ENCODE measurements at regions of chr14 and their contacts with region 1.

Region 1: GRCh38 chr14:34671716-34672115 is 41.8 kb upstream of the SNX6 start:
- DNase-seq: no peak
- H3K4me3 Mint-ChIP-seq: no peak overlapping the region
- H3K27ac Mint-ChIP-seq: no peak overlapping the region
- H3K4me1 Mint-ChIP-seq: no peaks in the 10 kb centered on the region
- H3K27me3 Mint-ChIP-seq: no peaks in the 10 kb centered on the region

Region 2: DNA sequence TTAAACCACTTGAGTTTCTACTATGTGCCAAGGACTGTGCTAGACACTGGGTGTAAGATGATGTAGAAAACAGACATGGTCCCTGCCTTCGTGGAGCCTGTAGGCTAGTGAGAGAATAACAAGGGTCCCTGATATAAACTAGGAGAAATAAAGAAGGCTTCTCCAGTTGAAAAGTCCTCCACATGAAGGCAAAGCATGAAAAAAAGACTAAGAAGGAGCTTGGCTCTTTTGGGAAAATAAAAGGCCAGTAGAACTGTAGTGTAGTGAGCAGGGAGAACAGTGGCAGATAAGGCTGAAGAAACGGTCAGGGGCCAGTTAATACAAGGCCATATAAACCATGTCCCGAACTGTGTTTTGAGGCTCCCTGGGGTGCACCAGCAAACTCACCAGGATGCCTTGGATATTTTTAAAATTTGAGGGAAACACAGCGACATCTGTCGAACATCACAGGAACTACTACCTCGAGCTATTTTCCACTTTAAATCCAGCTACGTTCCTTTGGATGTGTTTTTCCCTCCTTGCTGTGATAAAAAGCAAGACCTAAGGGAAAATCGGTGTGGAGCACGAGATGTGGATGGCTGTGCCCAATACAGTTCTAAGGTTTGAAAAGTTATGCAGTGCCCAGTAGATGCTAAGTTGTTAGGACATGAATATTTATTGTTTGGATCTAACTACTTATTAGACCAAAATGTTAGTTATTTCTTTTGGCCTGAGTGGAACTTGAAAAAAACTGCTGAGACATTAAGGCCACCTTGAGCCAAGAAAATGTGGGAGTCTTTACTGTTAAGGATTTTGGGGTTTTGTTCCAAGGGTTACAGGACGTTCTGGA is 51.2 kb after region 1 on chr14:
- intact Hi-C with region 1: loop called (anchors 1 kb)
- DNase-seq: peak; percentile 80
- H3K4me3 Mint-ChIP-seq: no peak overlapping the region
- H3K27ac Mint-ChIP-seq: no peak overlapping the region
- H3K4me1 Mint-ChIP-seq: peaks cover 7% of the 10 kb centered on the region
- H3K27me3 Mint-ChIP-seq: peaks cover 24% of the 10 kb centered on the region